ENCODE measurements at regions of chr1 and their contacts with region 1.

Region 1: DNA sequence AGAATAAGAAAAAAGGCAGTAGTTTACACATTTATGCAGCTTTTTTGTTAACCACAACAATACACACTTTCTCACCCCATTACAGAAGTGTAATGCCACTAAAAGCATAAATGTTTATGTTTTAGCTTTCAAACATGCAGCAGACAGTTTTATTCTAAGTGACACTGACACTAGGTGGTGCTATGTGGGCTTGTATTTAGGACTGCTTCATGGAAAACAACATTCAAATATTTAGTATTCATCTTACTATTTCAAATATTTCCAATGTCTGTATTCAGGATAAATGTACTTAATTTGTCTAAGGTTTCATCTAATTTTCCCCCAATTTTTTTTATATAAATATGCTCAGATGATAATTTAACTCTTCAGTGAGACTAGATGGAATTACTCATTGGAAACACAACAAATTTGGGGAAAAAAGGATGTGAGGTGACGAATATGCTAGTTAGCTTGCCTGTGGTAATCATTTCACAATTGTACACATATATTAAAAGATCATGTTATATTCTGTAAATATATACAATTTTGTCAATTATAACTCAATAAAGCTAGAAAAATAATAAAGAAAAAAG is 71.4 kb downstream of the USP1 start:
- DNase-seq: peak; percentile 50
- ATAC-seq: no peak
- H3K4me3 ChIP-seq: no peak overlapping the region
- H3K4me3 Mint-ChIP-seq: no peak overlapping the region
- H3K27ac ChIP-seq: no peak overlapping the region
- H3K27ac Mint-ChIP-seq: no peak overlapping the region
- H3K4me1 ChIP-seq: no peaks in the 10 kb centered on the region
- H3K4me1 Mint-ChIP-seq: no peaks in the 10 kb centered on the region
- H3K27me3 ChIP-seq: no peaks in the 10 kb centered on the region
- H3K27me3 Mint-ChIP-seq: no peaks in the 10 kb centered on the region
- CTCF ChIP-seq: peak; percentile 70

Region 2: GRCh38 chr1:62493656-62494055 is 14.6 kb before region 1 on chr1:
- CTCF ChIA-PET with region 1: interaction called, 11 read pairs
- POLR2A ChIA-PET with region 1: no interaction called
- intact Hi-C with region 1: no loop called
- DNase-seq: no peak
- ATAC-seq: no peak
- H3K4me3 ChIP-seq: no peak overlapping the region
- H3K4me3 Mint-ChIP-seq: no peak overlapping the region
- H3K27ac ChIP-seq: no peak overlapping the region
- H3K27ac Mint-ChIP-seq: no peak overlapping the region
- H3K4me1 ChIP-seq: no peaks in the 10 kb centered on the region
- H3K4me1 Mint-ChIP-seq: no peaks in the 10 kb centered on the region
- H3K27me3 ChIP-seq: no peaks in the 10 kb centered on the region
- H3K27me3 Mint-ChIP-seq: no peaks in the 10 kb centered on the region
- CTCF ChIP-seq: no peak

Region 3: DNA sequence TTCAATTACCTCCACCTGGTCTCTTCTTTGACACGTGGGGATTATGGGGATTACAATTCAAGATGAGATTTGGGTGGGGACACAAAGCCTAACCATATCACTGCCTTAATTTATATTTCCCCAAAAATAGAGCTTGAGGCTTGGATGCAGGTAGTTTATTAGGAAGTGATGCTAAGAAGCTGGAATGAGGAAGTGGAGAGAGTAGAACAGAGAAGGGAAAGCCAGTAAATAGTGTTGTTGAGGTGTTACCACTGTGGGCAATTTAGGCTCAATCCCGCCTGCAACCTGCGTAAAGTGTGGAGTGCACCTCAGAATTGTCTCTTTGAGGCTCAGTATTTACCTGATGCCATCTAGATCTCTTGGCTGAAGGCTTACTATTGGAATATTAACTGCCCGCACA is 184.8 kb after region 1 on chr1:
- CTCF ChIA-PET with region 1: no interaction called
- POLR2A ChIA-PET with region 1: no interaction called
- intact Hi-C with region 1: no loop called
- DNase-seq: no peak
- ATAC-seq: no peak
- H3K4me3 ChIP-seq: no peak overlapping the region
- H3K4me3 Mint-ChIP-seq: no peak overlapping the region
- H3K27ac ChIP-seq: no peak overlapping the region
- H3K27ac Mint-ChIP-seq: no peak overlapping the region
- H3K4me1 ChIP-seq: peaks cover 0 to 5% of the 10 kb centered on the region in 2 donors
- H3K4me1 Mint-ChIP-seq: peaks cover 19% of the 10 kb centered on the region
- H3K27me3 ChIP-seq: no peaks in the 10 kb centered on the region
- H3K27me3 Mint-ChIP-seq: no peaks in the 10 kb centered on the region
- CTCF ChIP-seq: no peak

Region 4: DNA sequence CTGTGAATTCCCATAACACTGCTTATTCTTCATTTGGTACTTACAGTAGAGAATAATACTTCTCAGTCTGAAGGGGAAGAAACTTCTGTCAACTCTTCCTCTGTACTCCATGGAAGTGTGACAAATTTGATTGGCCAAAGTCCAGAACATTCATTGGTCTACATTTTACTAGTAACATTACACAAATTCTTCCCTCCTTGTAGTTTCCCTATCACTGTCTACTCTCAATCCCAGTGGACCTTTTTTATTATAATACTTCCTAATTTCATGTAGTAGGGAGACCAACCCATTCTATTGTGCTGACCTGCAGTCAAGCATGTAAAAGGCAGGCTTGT is 933.8 kb after region 1 on chr1:
- CTCF ChIA-PET with region 1: no interaction called
- POLR2A ChIA-PET with region 1: no interaction called
- intact Hi-C with region 1: loop called (anchors 2 kb)
- DNase-seq: no peak
- ATAC-seq: no peak
- H3K4me3 ChIP-seq: no peak overlapping the region
- H3K4me3 Mint-ChIP-seq: no peak overlapping the region
- H3K27ac ChIP-seq: no peak overlapping the region
- H3K27ac Mint-ChIP-seq: no peak overlapping the region
- H3K4me1 ChIP-seq: peaks cover 3 to 7% of the 10 kb centered on the region in 2 donors
- H3K4me1 Mint-ChIP-seq: peaks cover 6% of the 10 kb centered on the region
- H3K27me3 ChIP-seq: no peaks in the 10 kb centered on the region
- H3K27me3 Mint-ChIP-seq: no peaks in the 10 kb centered on the region
- CTCF ChIP-seq: no peak